Activated CD8-positive, alpha-beta T cell treated with anti-CD3 and anti-CD28 coated beads for 36 hours (primary cell): ENCODE measurements at regions of chr14 and their contacts with region 1.

Region 1: GRCh38 chr14:100271247-100271939 is 32.4 kb downstream of the YY1 start:
- DNase-seq: peak; percentile 42
- ATAC-seq: no peak
- H3K4me3 Mint-ChIP-seq: no peak overlapping the region
- H3K27ac Mint-ChIP-seq: no peak overlapping the region
- H3K4me1 Mint-ChIP-seq: peaks cover 66% of the 10 kb centered on the region
- H3K27me3 Mint-ChIP-seq: no peaks in the 10 kb centered on the region
- CTCF ChIP-seq: peak; percentile 61

Region 2: GRCh38 chr14:100239840-100240724 is 31.3 kb before region 1 on chr14:
- CTCF ChIA-PET with region 1: interaction called, 12 read pairs
- POLR2A ChIA-PET with region 1: no interaction called
- intact Hi-C with region 1: no loop called
- DNase-seq: peak; percentile 88
- ATAC-seq: peak; percentile 52
- H3K4me3 Mint-ChIP-seq: peak overlapping the region; percentile 97
- H3K27ac Mint-ChIP-seq: peak overlapping the region; percentile 93
- H3K4me1 Mint-ChIP-seq: peaks cover 45% of the 10 kb centered on the region
- H3K27me3 Mint-ChIP-seq: no peaks in the 10 kb centered on the region
- CTCF ChIP-seq: peak; percentile 77